HCT116 (cell line): ENCODE measurements at regions of chrX and their contacts with region 1.

Region 1: GRCh38 chrX:57821703-57822375 is 88.4 kb downstream of the ZXDA start:
- DNase-seq: peak; percentile 48
- ATAC-seq: peak; percentile 81
- H3K4me3 ChIP-seq: 0 out of 4 replicates have a peak overlapping the region, but pooled peaks of 1 of the 2 experiments have one; percentile 8
- H3K27ac ChIP-seq: no peak overlapping the region
- H3K4me1 ChIP-seq: no peaks in the 10 kb centered on the region
- H3K27me3 ChIP-seq: no peaks in the 10 kb centered on the region
- CTCF ChIP-seq: peak; percentile 41 to 64 (median 42); a peak in 4 of 6 replicates
- POLR2A ChIP-seq: no peak
- RAD21 ChIP-seq: peak; percentile 73

Region 2: GRCh38 chrX:57156397-57157049 is 665.3 kb before region 1 on chrX:
- CTCF ChIA-PET with region 1: no interaction called
- POLR2A ChIA-PET with region 1: no interaction called
- RAD21 ChIA-PET with region 1: no interaction called
- intact Hi-C with region 1: loop called (anchors 5 kb)
- DNase-seq: peak; percentile 13
- ATAC-seq: peak; percentile 79
- H3K4me3 ChIP-seq: no peak overlapping the region
- H3K27ac ChIP-seq: no peak overlapping the region
- H3K4me1 ChIP-seq: peaks cover 0 to 6% of the 10 kb centered on the region in 2 experiments; a peak in 1 of 4 replicates
- H3K27me3 ChIP-seq: no peaks in the 10 kb centered on the region
- CTCF ChIP-seq: peak; percentile 18 to 47 (median 39); a peak in 5 of 6 replicates
- POLR2A ChIP-seq: no peak
- RAD21 ChIP-seq: peak; percentile 59

Region 3: DNA sequence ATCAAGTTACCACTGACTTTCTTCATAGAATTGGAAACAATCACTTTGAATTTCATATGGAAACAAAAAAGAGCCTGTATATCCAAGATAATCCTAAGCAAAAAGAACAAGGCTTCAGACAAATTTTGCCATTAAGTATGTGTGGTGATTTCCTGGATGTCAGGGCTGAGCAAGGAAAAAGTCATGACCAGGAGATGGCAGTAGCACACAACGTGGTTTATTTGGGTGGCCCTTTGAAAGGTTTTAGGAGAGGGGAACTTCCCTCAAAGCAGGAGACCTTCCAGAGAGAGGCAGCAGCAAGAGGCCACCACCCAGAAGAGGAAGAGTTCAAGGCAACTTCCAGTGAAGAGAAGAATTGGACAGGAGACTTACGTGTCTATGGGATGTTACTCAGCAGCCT is 248.1 kb before region 1 on chrX:
- CTCF ChIA-PET with region 1: no interaction called
- POLR2A ChIA-PET with region 1: no interaction called
- RAD21 ChIA-PET with region 1: no interaction called
- intact Hi-C with region 1: loop called (anchors 10 kb)
- DNase-seq: no peak
- ATAC-seq: peak; percentile 70
- H3K4me3 ChIP-seq: no peak overlapping the region
- H3K27ac ChIP-seq: no peak overlapping the region
- H3K4me1 ChIP-seq: no peaks in the 10 kb centered on the region
- H3K27me3 ChIP-seq: no peaks in the 10 kb centered on the region
- CTCF ChIP-seq: peak; percentile 21 to 50 (median 42); a peak in 3 of 6 replicates
- POLR2A ChIP-seq: no peak
- RAD21 ChIP-seq: peak; percentile 47

Region 4: DNA sequence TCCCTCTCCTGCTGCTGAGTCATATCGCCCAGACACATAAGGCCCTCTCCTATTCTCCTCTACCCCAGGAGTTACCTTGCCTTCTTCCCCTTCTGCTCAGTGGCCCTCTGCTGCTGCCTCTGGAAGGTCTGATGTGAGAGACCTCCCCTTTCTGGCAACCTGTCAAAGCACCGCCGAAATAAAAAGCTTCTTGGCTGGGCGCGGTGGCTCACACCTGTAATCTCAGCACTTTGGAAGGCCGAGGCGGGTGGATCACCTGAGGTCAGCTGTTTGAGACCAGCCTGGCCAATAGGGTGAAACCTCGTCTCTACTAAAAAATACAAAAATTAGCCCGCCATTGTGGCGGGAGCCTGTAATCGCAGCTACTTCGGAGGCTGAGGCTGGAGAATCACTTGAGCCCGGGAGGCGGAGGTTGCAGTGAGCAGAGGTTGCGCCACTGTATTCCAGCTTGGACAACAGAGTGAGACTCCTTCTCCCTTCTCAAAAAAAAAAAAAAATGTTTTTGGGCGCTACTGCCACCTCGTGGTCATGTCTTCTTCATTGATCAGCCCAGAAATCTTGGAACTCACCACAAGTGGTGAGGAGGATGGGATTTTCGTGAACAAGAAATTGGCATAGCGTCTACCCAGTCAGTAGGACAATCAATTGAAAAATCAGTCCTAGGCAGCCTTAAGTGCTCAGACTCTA is 97.1 kb after region 1 on chrX:
- CTCF ChIA-PET with region 1: interaction called, 6 read pairs
- POLR2A ChIA-PET with region 1: no interaction called
- RAD21 ChIA-PET with region 1: interaction called, 3 read pairs
- intact Hi-C with region 1: loop called (anchors 2 kb)
- DNase-seq: peak; percentile 26
- ATAC-seq: peak; percentile 78
- H3K4me3 ChIP-seq: peak overlapping the region; percentile 7 to 25; a peak in 2 of 4 replicates
- H3K27ac ChIP-seq: no peak overlapping the region
- H3K4me1 ChIP-seq: peaks cover 0 to 4% of the 10 kb centered on the region in 2 experiments; a peak in 1 of 4 replicates
- H3K27me3 ChIP-seq: no peaks in the 10 kb centered on the region
- CTCF ChIP-seq: peak; percentile 38 to 42 (median 41); a peak in 5 of 6 replicates
- POLR2A ChIP-seq: no peak
- RAD21 ChIP-seq: peak; percentile 39; the same call in 1 of the 2 replicates

Region 5: GRCh38 chrX:57929373-57929772 is 107.5 kb after region 1 on chrX:
- CTCF ChIA-PET with region 1: no interaction called
- POLR2A ChIA-PET with region 1: no interaction called
- RAD21 ChIA-PET with region 1: no interaction called
- intact Hi-C with region 1: loop called (anchors 1 kb)
- DNase-seq: peak; percentile 8
- ATAC-seq: peak; percentile 71
- H3K4me3 ChIP-seq: no peak overlapping the region
- H3K27ac ChIP-seq: no peak overlapping the region
- H3K4me1 ChIP-seq: no peaks in the 10 kb centered on the region
- H3K27me3 ChIP-seq: no peaks in the 10 kb centered on the region
- CTCF ChIP-seq: peak; percentile 26 to 50 (median 44); a peak in 4 of 6 replicates
- POLR2A ChIP-seq: no peak
- RAD21 ChIP-seq: peak; percentile 58

Region 6: DNA sequence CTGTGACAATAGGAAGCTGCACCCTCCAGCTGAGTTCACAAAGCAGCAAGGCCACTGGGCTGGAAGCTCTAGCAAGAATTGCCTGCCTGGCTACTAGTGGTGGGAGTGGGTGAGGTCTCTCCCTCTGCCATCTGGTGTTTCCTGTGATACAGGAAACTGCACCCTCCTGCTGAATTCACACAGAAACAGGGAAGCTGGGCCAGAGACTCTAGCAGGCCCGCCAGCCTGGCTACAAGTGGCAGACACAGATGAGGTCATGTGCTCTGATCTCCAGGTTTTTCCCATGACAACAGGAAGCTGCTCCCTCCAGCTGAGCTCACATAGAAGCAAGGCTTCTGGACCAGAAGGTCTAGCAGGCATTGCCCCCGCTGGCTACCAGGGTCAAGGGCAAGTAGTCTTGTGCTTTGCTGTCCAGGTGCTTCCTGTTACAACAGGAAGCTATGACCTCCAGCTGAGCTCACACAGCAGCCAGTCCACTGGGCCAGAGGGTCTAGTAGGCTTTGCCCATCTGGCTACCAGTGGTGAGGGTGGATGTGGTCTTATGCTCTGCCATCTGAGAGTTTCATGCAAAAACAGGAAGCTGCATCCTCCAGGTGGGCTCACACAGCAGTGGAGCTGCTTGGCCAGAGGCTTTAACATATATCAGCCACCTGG is 130.0 kb after region 1 on chrX:
- CTCF ChIA-PET with region 1: no interaction called
- POLR2A ChIA-PET with region 1: no interaction called
- RAD21 ChIA-PET with region 1: no interaction called
- intact Hi-C with region 1: no loop called
- DNase-seq: no peak
- ATAC-seq: no peak
- H3K4me3 ChIP-seq: no peak overlapping the region
- H3K27ac ChIP-seq: no peak overlapping the region
- H3K4me1 ChIP-seq: no peaks in the 10 kb centered on the region
- H3K27me3 ChIP-seq: no peaks in the 10 kb centered on the region
- CTCF ChIP-seq: no peak
- POLR2A ChIP-seq: no peak
- RAD21 ChIP-seq: no peak

Region 7: GRCh38 chrX:58025979-58026378 is 204.1 kb after region 1 on chrX:
- CTCF ChIA-PET with region 1: interaction called, 4 read pairs
- POLR2A ChIA-PET with region 1: no interaction called
- RAD21 ChIA-PET with region 1: no interaction called
- intact Hi-C with region 1: loop called (anchors 1 kb)
- DNase-seq: peak; percentile 26
- ATAC-seq: no peak
- H3K4me3 ChIP-seq: no peak overlapping the region
- H3K27ac ChIP-seq: no peak overlapping the region
- H3K4me1 ChIP-seq: no peaks in the 10 kb centered on the region
- H3K27me3 ChIP-seq: no peaks in the 10 kb centered on the region
- CTCF ChIP-seq: peak; percentile 13 to 50 (median 37); a peak in 4 of 6 replicates
- POLR2A ChIP-seq: no peak
- RAD21 ChIP-seq: peak; percentile 39